ENCODE measurements at regions of chr17 and their contacts with region 1.

Region 1: GRCh38 chr17:15502369-15503112 is 35.1 kb upstream of the CDRT4 start:
- DNase-seq: peak; percentile 74
- H3K4me3 Mint-ChIP-seq: no peak overlapping the region
- H3K27ac Mint-ChIP-seq: no peak overlapping the region
- H3K4me1 Mint-ChIP-seq: peaks cover 8% of the 10 kb centered on the region
- H3K27me3 Mint-ChIP-seq: no peaks in the 10 kb centered on the region
- CTCF ChIP-seq: peak; percentile 56

Region 2: DNA sequence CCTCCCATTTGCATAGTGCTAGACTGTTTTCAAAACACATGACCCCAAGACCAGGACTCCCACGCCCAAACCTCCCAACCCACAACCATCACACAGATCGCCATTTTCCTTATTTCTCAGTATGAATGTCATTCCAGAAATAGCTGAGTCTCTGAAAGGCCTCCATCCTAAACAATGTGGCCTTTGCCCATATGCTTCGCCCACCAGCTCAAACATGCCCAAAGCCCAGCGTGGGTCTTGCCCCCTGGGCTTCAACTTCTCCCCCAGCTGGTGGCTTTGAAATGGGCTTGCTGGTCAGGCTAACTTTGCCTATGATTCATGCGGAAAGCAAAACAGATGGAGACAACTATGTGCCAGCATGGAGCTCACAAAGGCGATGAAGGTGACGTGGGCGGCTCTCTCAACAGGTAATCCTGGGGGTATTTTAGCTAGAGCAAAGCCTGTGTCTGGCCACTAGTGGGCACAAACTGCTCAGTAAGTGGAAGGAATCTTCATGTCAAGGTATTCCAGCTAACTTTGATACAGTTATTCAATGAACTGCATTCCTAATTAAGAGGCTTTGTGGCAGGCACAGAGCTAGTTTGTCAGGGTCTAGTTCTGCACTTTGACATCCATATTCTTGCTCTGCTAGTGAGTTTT is 254.5 kb before region 1 on chr17:
- CTCF ChIA-PET with region 1: interaction called, 15 read pairs
- intact Hi-C with region 1: no loop called
- DNase-seq: no peak
- H3K4me3 Mint-ChIP-seq: no peak overlapping the region
- H3K27ac Mint-ChIP-seq: no peak overlapping the region
- H3K4me1 Mint-ChIP-seq: no peaks in the 10 kb centered on the region
- H3K27me3 Mint-ChIP-seq: no peaks in the 10 kb centered on the region
- CTCF ChIP-seq: no peak

Region 3: GRCh38 chr17:15260376-15261257 is 241.9 kb before region 1 on chr17:
- CTCF ChIA-PET with region 1: interaction called, 8 read pairs
- intact Hi-C with region 1: loop called (anchors 2 kb)
- DNase-seq: peak; percentile 77
- H3K4me3 Mint-ChIP-seq: peak overlapping the region; percentile 70
- H3K27ac Mint-ChIP-seq: no peak overlapping the region
- H3K4me1 Mint-ChIP-seq: peaks cover 18% of the 10 kb centered on the region
- H3K27me3 Mint-ChIP-seq: peaks cover 33% of the 10 kb centered on the region
- CTCF ChIP-seq: peak; percentile 41

Region 4: GRCh38 chr17:15490634-15491261 is 11.8 kb before region 1 on chr17:
- CTCF ChIA-PET with region 1: interaction called, 14 read pairs
- intact Hi-C with region 1: no loop called
- DNase-seq: peak; percentile 74
- H3K4me3 Mint-ChIP-seq: no peak overlapping the region
- H3K27ac Mint-ChIP-seq: peak overlapping the region; percentile 95
- H3K4me1 Mint-ChIP-seq: peaks cover 16% of the 10 kb centered on the region
- H3K27me3 Mint-ChIP-seq: no peaks in the 10 kb centered on the region
- CTCF ChIP-seq: no peak

Measured in Calu3 (cell line).